ENCODE measurements at regions of chr10 and their contacts with region 1.

Region 1: GRCh38 chr10:95693668-95694534 is at the start of gene TCTN3:
- DNase-seq: peak; percentile 91 to 100
- ATAC-seq: peak; percentile 95 to 99 (median 95)
- H3K4me3 ChIP-seq: peak within 1 kb of the TSS; percentile 89
- H3K4me3 Mint-ChIP-seq: peak within 1 kb of the TSS; percentile 95
- H3K27ac ChIP-seq: peak within 1 kb of the TSS; percentile 90
- H3K27ac Mint-ChIP-seq: peak within 1 kb of the TSS; percentile 94 to 96
- H3K4me1 ChIP-seq: peaks cover 15% of the 10 kb centered on the region
- H3K4me1 Mint-ChIP-seq: peaks cover 35% of the 10 kb centered on the region in 2 donors
- H3K27me3 ChIP-seq: no peaks in the 10 kb centered on the region
- H3K27me3 Mint-ChIP-seq: peaks cover 0 to 2% of the 10 kb centered on the region in 2 donors
- CTCF ChIP-seq: peak; percentile 98
- total RNA-seq, gene TCTN3: 15.3 to 20.6 (median 15.8) TPM

Region 2: GRCh38 chr10:95574649-95575365 is 119.1 kb before region 1 on chr10:
- intact Hi-C with region 1: no loop called
- DNase-seq: no peak
- ATAC-seq: no peak
- H3K4me3 ChIP-seq: no peak overlapping the region
- H3K4me3 Mint-ChIP-seq: no peak overlapping the region
- H3K27ac ChIP-seq: no peak overlapping the region
- H3K27ac Mint-ChIP-seq: no peak overlapping the region
- H3K4me1 ChIP-seq: no peaks in the 10 kb centered on the region
- H3K4me1 Mint-ChIP-seq: no peaks in the 10 kb centered on the region
- H3K27me3 ChIP-seq: peaks cover 3% of the 10 kb centered on the region
- H3K27me3 Mint-ChIP-seq: peaks cover 15 to 35% of the 10 kb centered on the region in 2 donors
- CTCF ChIP-seq: no peak

Region 3: DNA sequence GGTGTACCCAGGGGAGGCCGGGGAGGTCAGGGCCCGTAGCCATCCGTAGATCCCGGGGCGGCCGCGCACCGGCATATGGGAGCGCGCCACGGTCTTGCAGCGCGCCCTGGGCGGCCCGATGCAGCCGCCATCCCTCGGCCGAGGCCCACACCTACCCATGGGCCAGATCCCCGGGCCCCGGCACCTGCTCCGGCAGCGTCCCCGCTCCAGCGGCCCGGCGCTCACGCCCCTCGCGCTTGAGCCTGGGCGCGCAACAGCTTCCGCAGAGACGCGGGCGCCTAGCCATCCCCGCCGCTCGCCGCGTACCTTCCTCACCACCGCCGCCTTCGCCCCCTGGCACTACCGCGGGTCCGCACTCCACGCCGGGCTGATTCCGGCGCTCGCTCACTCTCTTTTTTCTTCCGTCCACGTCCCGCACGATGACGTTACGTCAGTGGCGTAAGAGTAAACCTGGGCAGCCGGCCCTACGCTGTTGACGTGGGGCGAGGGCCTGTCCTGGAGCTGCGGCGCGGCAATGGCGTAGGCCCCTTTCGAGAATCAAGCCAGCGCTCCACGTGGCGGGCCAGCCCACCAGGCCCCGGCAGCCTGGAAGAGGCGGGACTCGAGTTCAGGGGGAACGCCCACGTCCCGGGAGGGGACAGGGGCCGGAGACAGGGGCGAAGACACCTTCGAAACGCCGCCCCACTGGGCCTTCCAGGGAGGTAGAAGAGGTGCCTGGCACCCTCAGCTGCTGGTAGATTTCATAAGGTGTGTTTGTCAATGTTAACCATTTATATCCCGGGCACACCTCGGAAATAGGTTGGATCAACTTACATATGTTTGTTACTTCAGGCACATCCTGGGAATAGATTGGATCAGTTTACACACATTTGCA is 37.4 kb before region 1 on chr10 and contains the start of gene ALDH18A1:
- intact Hi-C with region 1: loop called (anchors 2 kb)
- DNase-seq: peak; percentile 84 to 95
- ATAC-seq: peak; percentile 93 to 96 (median 95)
- H3K4me3 ChIP-seq: peak within 1 kb of the TSS; percentile 49
- H3K4me3 Mint-ChIP-seq: peak within 1 kb of the TSS; percentile 99
- H3K27ac ChIP-seq: peak within 1 kb of the TSS; percentile 49
- H3K27ac Mint-ChIP-seq: peak within 1 kb of the TSS; percentile 87 to 88
- H3K4me1 ChIP-seq: peaks cover 18% of the 10 kb centered on the region
- H3K4me1 Mint-ChIP-seq: peaks cover 21 to 24% of the 10 kb centered on the region in 2 donors
- H3K27me3 ChIP-seq: no peaks in the 10 kb centered on the region
- H3K27me3 Mint-ChIP-seq: no peaks in the 10 kb centered on the region
- CTCF ChIP-seq: no peak
- total RNA-seq, gene ALDH18A1: 20.7 to 33.4 (median 25.2) TPM

Region 4: DNA sequence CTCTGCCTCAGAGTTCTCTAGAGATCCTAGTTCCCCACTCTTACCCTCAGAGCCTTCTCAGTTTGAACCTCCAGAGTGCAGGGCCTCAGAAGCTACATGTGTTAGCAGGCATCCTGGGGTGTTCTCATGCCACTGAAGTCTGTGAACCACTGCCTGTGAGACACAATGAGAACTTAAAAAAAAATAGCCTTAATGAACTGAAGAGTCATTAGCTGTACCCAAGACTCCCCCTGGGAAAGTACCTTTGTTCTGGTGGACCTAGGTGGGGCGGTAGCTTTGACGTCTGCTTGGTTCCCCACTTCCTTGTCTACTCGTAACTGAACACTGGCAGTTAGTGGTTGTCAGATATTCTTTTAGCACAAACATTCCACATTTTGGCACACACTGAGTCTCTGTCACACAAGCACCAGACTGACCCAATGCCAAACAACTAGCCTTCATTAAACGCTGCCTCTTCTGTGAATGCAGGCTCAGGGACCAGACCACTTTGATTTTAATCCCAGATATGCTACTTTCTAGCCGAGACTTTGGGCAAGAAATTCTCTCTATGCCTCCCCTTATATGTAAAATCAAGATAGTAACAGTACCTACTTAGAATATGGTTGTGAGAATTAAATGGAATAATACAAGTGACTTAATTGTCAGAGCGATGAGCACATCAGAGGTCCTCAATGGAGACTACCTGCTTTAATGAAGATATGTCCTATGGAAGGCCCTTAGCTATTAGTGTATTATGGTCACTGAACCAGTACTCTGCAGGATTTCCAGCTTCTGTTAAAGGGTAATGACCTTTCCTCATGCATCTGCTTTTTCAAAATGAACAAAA is 138.5 kb after region 1 on chr10:
- intact Hi-C with region 1: loop called (anchors 2 kb)
- DNase-seq: peak; percentile 52 to 88
- ATAC-seq: peak; percentile 88 to 95 (median 92)
- H3K4me3 ChIP-seq: no peak overlapping the region
- H3K4me3 Mint-ChIP-seq: peak overlapping the region; percentile 40
- H3K27ac ChIP-seq: peak overlapping the region; percentile 90
- H3K27ac Mint-ChIP-seq: peak overlapping the region; percentile 92 to 94
- H3K4me1 ChIP-seq: peaks cover 36% of the 10 kb centered on the region
- H3K4me1 Mint-ChIP-seq: peaks cover 33 to 40% of the 10 kb centered on the region in 2 donors
- H3K27me3 ChIP-seq: no peaks in the 10 kb centered on the region
- H3K27me3 Mint-ChIP-seq: no peaks in the 10 kb centered on the region
- CTCF ChIP-seq: no peak

Region 5: GRCh38 chr10:95841661-95842498 is 148.0 kb after region 1 on chr10:
- intact Hi-C with region 1: loop called (anchors 1 kb)
- DNase-seq: peak in 1 of 2 donors; percentile 82
- ATAC-seq: peak; percentile 81 to 90 (median 86)
- H3K4me3 ChIP-seq: no peak overlapping the region
- H3K4me3 Mint-ChIP-seq: no peak overlapping the region
- H3K27ac ChIP-seq: peak overlapping the region; percentile 36
- H3K27ac Mint-ChIP-seq: peak overlapping the region in 1 of 2 donors; percentile 67
- H3K4me1 ChIP-seq: peaks cover 11% of the 10 kb centered on the region
- H3K4me1 Mint-ChIP-seq: peaks cover 9 to 12% of the 10 kb centered on the region in 2 donors
- H3K27me3 ChIP-seq: no peaks in the 10 kb centered on the region
- H3K27me3 Mint-ChIP-seq: no peaks in the 10 kb centered on the region
- CTCF ChIP-seq: peak; percentile 73

Region 6: GRCh38 chr10:95864906-95865813 is 171.3 kb after region 1 on chr10:
- intact Hi-C with region 1: loop called (anchors 1 kb)
- DNase-seq: peak; percentile 27 to 74
- ATAC-seq: peak; percentile 89 to 98 (median 97)
- H3K4me3 ChIP-seq: no peak overlapping the region
- H3K4me3 Mint-ChIP-seq: no peak overlapping the region
- H3K27ac ChIP-seq: no peak overlapping the region
- H3K27ac Mint-ChIP-seq: peak overlapping the region in 1 of 2 donors; percentile 78
- H3K4me1 ChIP-seq: peaks cover 6% of the 10 kb centered on the region
- H3K4me1 Mint-ChIP-seq: peaks cover 6 to 7% of the 10 kb centered on the region in 2 donors
- H3K27me3 ChIP-seq: no peaks in the 10 kb centered on the region
- H3K27me3 Mint-ChIP-seq: no peaks in the 10 kb centered on the region
- CTCF ChIP-seq: peak; percentile 65

Region 7: DNA sequence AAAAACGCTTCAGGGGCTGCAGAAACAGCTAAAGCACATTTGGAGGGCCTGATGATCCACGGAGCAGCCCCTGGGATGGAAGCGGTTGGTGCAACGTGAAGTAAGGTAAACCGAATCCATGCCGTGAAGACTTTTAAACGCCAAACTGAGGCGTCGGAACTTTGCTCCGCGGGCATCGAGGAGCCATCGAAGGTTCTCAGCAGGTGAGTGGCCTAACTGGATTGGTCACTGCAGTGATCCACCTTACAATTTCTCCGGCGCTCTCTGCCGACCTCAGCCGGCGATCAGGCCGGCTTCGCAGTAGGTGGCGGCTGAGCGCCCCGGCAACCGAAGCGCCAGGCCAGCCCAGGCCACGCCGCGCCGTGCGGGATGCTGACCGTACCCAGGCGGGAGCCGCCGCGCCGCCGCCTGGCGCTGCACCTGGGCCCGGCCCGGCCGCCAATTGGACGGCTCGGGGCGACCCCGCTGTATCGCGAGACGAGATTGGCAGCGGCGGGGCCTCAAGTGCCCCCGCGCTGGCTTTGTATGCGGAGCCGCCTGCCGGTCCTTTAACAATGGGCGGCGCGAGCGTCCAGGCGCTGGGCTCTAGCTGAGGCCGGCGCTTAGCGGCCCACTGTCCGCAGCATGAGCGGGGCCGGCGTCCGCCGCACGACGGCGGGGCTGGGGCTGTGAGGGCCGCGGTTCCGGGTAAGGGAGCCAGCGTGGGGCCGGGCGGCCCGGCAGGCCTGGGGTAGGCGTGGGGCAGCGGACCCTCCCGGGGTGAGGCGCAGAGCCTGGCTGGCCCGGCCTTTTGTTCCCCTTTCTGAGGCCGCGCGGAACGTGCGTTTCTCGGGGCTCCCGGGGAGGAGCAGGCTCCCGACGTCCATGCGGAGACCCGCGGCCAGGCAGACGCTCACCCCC is 349.4 kb after region 1 on chr10 and contains the start of gene CCNJ:
- intact Hi-C with region 1: loop called (anchors 5 kb)
- DNase-seq: peak; percentile 82 to 90
- ATAC-seq: peak; percentile 89 to 90 (median 90)
- H3K4me3 ChIP-seq: peak within 1 kb of the TSS; percentile 64
- H3K4me3 Mint-ChIP-seq: peak within 1 kb of the TSS; percentile 90
- H3K27ac ChIP-seq: peak within 1 kb of the TSS; percentile 77
- H3K27ac Mint-ChIP-seq: peak within 1 kb of the TSS; percentile 79 to 92
- H3K4me1 ChIP-seq: peaks cover 15% of the 10 kb centered on the region
- H3K4me1 Mint-ChIP-seq: peaks cover 29 to 38% of the 10 kb centered on the region in 2 donors
- H3K27me3 ChIP-seq: no peaks in the 10 kb centered on the region
- H3K27me3 Mint-ChIP-seq: peaks cover 1 to 6% of the 10 kb centered on the region in 2 donors
- CTCF ChIP-seq: no peak
- total RNA-seq, gene CCNJ: 5.9 to 7.1 (median 6.0) TPM

Region 8: GRCh38 chr10:96129387-96130325 is 435.8 kb after region 1 on chr10 and contains the start of gene ZNF518A:
- intact Hi-C with region 1: loop called (anchors 1 kb)
- DNase-seq: peak; percentile 88 to 97
- ATAC-seq: peak; percentile 85 to 91 (median 85)
- H3K4me3 ChIP-seq: peak within 1 kb of the TSS; percentile 60
- H3K4me3 Mint-ChIP-seq: peak within 1 kb of the TSS; percentile 98
- H3K27ac ChIP-seq: peak within 1 kb of the TSS; percentile 90
- H3K27ac Mint-ChIP-seq: peak within 1 kb of the TSS; percentile 97 to 98
- H3K4me1 ChIP-seq: peaks cover 10% of the 10 kb centered on the region
- H3K4me1 Mint-ChIP-seq: peaks cover 27 to 29% of the 10 kb centered on the region in 2 donors
- H3K27me3 ChIP-seq: peaks cover 30% of the 10 kb centered on the region
- H3K27me3 Mint-ChIP-seq: peaks cover 30 to 36% of the 10 kb centered on the region in 2 donors
- CTCF ChIP-seq: no peak
- total RNA-seq, gene ZNF518A: 17.6 to 34.7 (median 21.8) TPM

Measured in natural killer cell (primary cell).